A673 (cell line): ENCODE measurements at regions of chr2 and their contacts with region 1.

Region 1: GRCh38 chr2:96683972-96684820 is 41.6 kb downstream of the FER1L5 start:
- DNase-seq: no peak
- H3K4me3 ChIP-seq: no peak overlapping the region
- H3K27ac ChIP-seq: no peak overlapping the region
- H3K4me1 ChIP-seq: no peaks in the 10 kb centered on the region
- H3K27me3 ChIP-seq: no peaks in the 10 kb centered on the region
- CTCF ChIP-seq: no peak

Region 2: DNA sequence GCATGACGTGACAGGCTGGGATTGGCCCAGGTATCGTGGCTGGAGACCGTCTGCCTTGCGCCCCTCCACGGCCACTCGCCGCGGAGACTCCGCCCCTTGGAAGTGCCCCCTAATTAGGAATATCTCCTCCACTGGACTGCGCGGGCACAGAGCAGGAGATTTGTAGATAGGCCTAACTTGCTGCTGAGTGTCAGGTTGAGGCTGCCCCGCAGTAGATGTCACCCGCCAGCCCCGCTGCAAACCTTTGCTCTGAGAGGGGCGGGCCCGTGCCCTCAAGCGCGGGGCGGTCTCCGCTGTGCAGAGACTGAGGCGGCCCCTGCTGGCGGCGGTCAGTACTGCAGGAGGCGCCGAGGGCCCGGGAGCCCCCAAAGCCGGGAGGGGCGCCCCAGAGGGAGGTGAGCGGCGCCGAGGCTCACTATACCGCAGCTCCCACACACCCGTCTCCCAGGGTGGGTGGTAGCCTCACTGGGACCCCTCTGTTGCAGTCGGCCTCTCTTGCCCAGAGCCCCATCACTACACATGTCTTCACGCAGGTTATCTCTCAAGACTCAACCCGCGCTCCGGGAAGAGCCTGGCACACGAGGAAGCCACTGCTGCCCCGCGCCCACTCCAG is 176.2 kb before region 1 on chr2:
- CTCF ChIA-PET with region 1: no interaction called
- POLR2A ChIA-PET with region 1: no interaction called
- intact Hi-C with region 1: no loop called
- DNase-seq: peak; percentile 81
- H3K4me3 ChIP-seq: peak overlapping the region; percentile 43
- H3K27ac ChIP-seq: no peak overlapping the region
- H3K4me1 ChIP-seq: peaks cover 4% of the 10 kb centered on the region
- H3K27me3 ChIP-seq: no peaks in the 10 kb centered on the region
- CTCF ChIP-seq: peak; percentile 97

Region 3: DNA sequence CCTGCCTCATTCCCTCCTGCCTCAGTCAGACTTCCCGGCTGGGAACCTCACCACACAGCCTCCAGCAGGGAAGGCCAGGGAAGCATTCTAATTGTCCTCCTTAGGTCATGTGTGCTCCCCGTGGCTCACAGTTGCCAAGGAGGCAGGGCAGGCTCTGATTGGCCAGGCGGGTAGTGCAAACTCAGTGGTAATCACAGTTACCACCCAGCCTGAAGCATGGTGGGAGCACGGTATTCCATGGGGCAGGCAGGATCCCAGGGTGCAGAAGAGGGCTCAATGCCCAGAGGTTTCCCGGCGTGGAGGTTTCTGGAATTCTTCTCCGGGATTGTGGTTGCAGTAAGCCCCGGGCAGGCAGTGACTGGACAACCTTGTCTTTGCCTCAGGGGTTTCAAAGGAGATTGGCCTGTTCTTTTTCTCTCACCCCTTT is 14.5 kb before region 1 on chr2:
- CTCF ChIA-PET with region 1: no interaction called
- POLR2A ChIA-PET with region 1: no interaction called
- intact Hi-C with region 1: no loop called
- DNase-seq: no peak
- H3K4me3 ChIP-seq: no peak overlapping the region
- H3K27ac ChIP-seq: no peak overlapping the region
- H3K4me1 ChIP-seq: peaks cover 19% of the 10 kb centered on the region
- H3K27me3 ChIP-seq: no peaks in the 10 kb centered on the region
- CTCF ChIP-seq: no peak

Region 4: DNA sequence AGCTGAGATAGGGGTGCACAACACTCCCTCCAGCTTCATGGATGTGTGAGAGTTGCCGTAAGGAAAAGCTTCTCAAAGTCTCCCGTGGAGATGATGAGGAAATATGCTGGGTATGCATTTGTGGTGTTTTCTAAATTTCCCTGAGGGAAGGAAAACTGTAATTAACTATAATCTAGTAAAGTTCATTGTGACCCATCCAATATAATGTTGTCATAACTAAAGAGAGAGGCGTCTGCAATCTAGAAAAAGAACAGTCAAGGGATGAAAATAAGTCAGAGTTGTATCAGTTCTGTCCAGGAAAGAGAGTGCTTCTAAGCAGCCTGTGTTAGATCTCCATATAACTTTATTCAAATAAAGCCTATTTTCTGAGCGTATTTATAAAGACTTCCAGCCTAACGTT is 62.9 kb after region 1 on chr2:
- CTCF ChIA-PET with region 1: no interaction called
- POLR2A ChIA-PET with region 1: interaction called, 14 read pairs
- intact Hi-C with region 1: no loop called
- DNase-seq: peak; percentile 70
- H3K4me3 ChIP-seq: peak overlapping the region; percentile 10
- H3K27ac ChIP-seq: no peak overlapping the region
- H3K4me1 ChIP-seq: peaks cover 19% of the 10 kb centered on the region
- H3K27me3 ChIP-seq: no peaks in the 10 kb centered on the region
- CTCF ChIP-seq: no peak

Region 5: DNA sequence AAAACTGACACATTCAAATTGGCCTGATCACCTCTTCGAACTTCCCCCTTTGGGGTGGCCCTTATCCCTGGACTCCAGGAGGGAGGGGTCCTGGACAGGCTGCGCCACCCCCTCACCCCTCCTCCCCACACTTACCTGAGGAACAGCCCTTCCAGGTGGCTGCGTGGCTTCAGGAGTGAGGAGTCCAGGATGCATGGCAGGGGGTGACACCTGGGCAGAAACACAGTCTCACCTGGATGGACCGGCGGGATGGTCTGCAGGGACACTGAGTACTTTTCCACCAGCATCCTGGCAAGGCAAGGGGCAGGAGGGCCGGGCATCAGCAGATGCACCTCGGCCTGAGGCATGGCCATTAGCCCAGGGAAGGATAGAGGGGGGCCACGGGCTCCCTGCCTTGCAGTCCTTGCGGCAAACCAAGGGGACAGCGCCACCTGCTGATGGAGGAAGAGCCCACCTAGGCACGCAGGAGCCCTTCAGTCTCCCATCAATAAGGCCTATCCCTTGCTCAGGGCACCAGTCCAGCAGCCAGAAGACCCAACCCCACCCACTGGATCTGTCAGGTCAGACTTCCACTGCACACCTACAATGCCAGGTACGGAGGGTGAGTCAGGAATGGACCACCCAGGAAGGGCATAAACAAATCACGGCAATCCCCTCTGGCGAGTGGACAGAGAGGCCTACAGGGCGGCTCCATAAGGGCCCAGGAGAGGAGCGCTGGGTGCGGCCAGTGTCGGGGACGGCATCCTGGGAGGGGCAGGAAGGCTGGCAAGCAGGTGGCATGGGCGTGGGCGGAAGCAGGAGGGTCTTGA is 276.2 kb after region 1 on chr2:
- CTCF ChIA-PET with region 1: no interaction called
- POLR2A ChIA-PET with region 1: no interaction called
- intact Hi-C with region 1: no loop called
- DNase-seq: peak; percentile 88
- H3K4me3 ChIP-seq: no peak overlapping the region
- H3K27ac ChIP-seq: no peak overlapping the region
- H3K4me1 ChIP-seq: peaks cover 18% of the 10 kb centered on the region
- H3K27me3 ChIP-seq: no peaks in the 10 kb centered on the region
- CTCF ChIP-seq: peak; percentile 96